Ascending aorta (tissue), 2 donors: ENCODE measurements at regions of chr12 and their contacts with region 1.

Region 1: GRCh38 chr12:124567661-124568373 is 405 bp upstream of the NCOR2 start:
- DNase-seq: peak; percentile 83 to 96
- H3K4me3 ChIP-seq: peak overlapping the region; percentile 39 to 75
- H3K27ac ChIP-seq: peak overlapping the region; percentile 88 to 91
- H3K4me1 ChIP-seq: peaks cover 16 to 44% of the 10 kb centered on the region in 2 donors
- H3K27me3 ChIP-seq: no peaks in the 10 kb centered on the region
- CTCF ChIP-seq: no peak

Region 2: GRCh38 chr12:124369055-124369900 is 198.5 kb before region 1 on chr12:
- intact Hi-C with region 1: loop called (anchors 5 kb)
- DNase-seq: peak; percentile 61 to 95
- H3K4me3 ChIP-seq: peak overlapping the region in 1 of 2 donors; percentile 37
- H3K27ac ChIP-seq: peak overlapping the region; percentile 83 to 87
- H3K4me1 ChIP-seq: peaks cover 26 to 34% of the 10 kb centered on the region in 2 donors
- H3K27me3 ChIP-seq: no peaks in the 10 kb centered on the region
- CTCF ChIP-seq: peak; percentile 46 to 73 (median 49)

Region 3: GRCh38 chr12:124441443-124442194 is 126.2 kb before region 1 on chr12:
- intact Hi-C with region 1: no loop called
- DNase-seq: peak; percentile 47 to 91
- H3K4me3 ChIP-seq: peak overlapping the region in 1 of 2 donors; percentile 12
- H3K27ac ChIP-seq: peak overlapping the region; percentile 79 to 83
- H3K4me1 ChIP-seq: peaks cover 20 to 27% of the 10 kb centered on the region in 2 donors
- H3K27me3 ChIP-seq: no peaks in the 10 kb centered on the region
- CTCF ChIP-seq: no peak

Region 4: DNA sequence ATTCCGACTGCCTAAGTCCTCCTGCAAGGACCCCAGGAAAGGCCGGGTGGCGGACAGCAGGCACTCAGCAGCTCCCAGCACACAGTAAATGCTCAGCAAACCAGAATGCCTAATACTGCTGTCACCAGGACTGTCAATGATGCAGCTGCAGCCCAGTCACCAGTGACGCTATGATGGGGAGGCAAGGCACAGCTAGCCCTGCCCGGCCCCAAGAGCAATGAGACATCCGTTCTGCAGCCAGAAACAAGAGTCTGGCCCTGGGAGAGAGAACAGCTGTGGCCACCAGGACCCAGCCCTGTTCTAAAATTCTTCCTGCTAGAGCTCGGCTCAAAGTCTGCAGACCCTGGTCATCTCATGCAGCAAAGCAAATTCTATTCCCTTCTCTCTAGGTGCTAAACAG is 70.2 kb before region 1 on chr12:
- intact Hi-C with region 1: loop called (anchors 2 kb)
- DNase-seq: peak in 1 of 2 donors; percentile 89
- H3K4me3 ChIP-seq: no peak overlapping the region
- H3K27ac ChIP-seq: peak overlapping the region; percentile 68 to 74
- H3K4me1 ChIP-seq: peaks cover 26 to 41% of the 10 kb centered on the region in 2 donors
- H3K27me3 ChIP-seq: no peaks in the 10 kb centered on the region
- CTCF ChIP-seq: no peak

Region 5: GRCh38 chr12:124620751-124621660 is 53.2 kb after region 1 on chr12:
- intact Hi-C with region 1: loop called (anchors 1 kb)
- DNase-seq: peak; percentile 41 to 93
- H3K4me3 ChIP-seq: no peak overlapping the region
- H3K27ac ChIP-seq: peak overlapping the region; percentile 50 to 62
- H3K4me1 ChIP-seq: peaks cover 6 to 23% of the 10 kb centered on the region in 2 donors
- H3K27me3 ChIP-seq: no peaks in the 10 kb centered on the region
- CTCF ChIP-seq: no peak

Region 6: GRCh38 chr12:124745891-124746570 is 178.2 kb after region 1 on chr12:
- intact Hi-C with region 1: loop called (anchors 5 kb)
- DNase-seq: peak; percentile 77 to 98
- H3K4me3 ChIP-seq: peak overlapping the region in 1 of 2 donors; percentile 2
- H3K27ac ChIP-seq: peak overlapping the region; percentile 83 to 89
- H3K4me1 ChIP-seq: peaks cover 8 to 12% of the 10 kb centered on the region in 2 donors
- H3K27me3 ChIP-seq: no peaks in the 10 kb centered on the region
- CTCF ChIP-seq: no peak